Heart left ventricle (tissue), 16 donors: ENCODE measurements at regions of chr16 and their contacts with region 1.

Region 1: GRCh38 chr16:1610276-1611017 is 1.4 kb downstream of the IFT140 start:
- DNase-seq: peak; percentile 85 to 95 (median 90)
- ATAC-seq: peak; percentile 48 to 77 (median 74)
- H3K4me3 ChIP-seq: peak overlapping the region; percentile 25 to 96 (median 72)
- H3K27ac ChIP-seq: peak overlapping the region; percentile 58 to 92 (median 82)
- H3K4me1 ChIP-seq: peaks cover 5 to 46% (median 33%) of the 10 kb centered on the region in 12 donors
- H3K27me3 ChIP-seq: no peaks in the 10 kb centered on the region
- CTCF ChIP-seq: no peak
- POLR2A ChIP-seq: peak in 1 of 2 donors; percentile 27

Region 2: DNA sequence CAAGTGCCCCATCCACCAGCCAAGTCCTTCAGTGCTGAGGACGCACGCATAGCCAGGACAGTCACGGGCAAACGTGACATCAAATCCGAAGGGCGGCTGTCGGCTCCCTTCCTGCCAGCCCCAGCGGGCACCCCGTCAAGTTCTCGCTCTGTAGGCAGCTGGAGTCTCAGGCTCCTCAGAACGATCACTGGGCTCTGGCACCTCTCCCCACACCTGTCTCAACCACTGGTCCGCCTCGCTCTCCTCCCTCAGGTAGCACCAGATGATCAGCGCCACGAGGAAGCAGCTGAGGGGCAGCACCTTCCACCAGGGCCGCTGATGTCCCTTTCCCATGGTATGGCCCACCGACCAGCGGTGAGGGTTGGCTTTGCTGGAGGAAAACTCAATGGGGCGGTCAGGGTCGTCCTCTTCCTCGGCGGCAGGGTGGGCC is 190.3 kb before region 1 on chr16:
- intact Hi-C with region 1: loop called in 1 of 10 experiments (anchors 5 kb)
- DNase-seq: peak in 2 of 5 donors; percentile 39 to 45
- ATAC-seq: peak in 2 of 4 donors; percentile 1 to 2
- H3K4me3 ChIP-seq: peak overlapping the region; percentile 61 to 98 (median 88)
- H3K27ac ChIP-seq: peak overlapping the region in 11 of 12 donors; percentile 61 to 99 (median 98)
- H3K4me1 ChIP-seq: peaks cover 4 to 26% (median 18%) of the 10 kb centered on the region in 12 donors
- H3K27me3 ChIP-seq: no peaks in the 10 kb centered on the region
- CTCF ChIP-seq: no peak
- POLR2A ChIP-seq: no peak

Region 3: GRCh38 chr16:1533443-1533951 is 77.0 kb before region 1 on chr16 and contains the start of gene TMEM204:
- intact Hi-C with region 1: loop called in 3 of 10 experiments (anchors 1 to 5 kb)
- DNase-seq: peak; percentile 87 to 91 (median 90)
- ATAC-seq: peak; percentile 52 to 76 (median 62)
- H3K4me3 ChIP-seq: peak within 1 kb of the TSS; percentile 66 to 93 (median 87)
- H3K27ac ChIP-seq: peak within 1 kb of the TSS; percentile 92 to 99 (median 96)
- H3K4me1 ChIP-seq: peaks cover 8 to 83% (median 66%) of the 10 kb centered on the region in 12 donors
- H3K27me3 ChIP-seq: peaks cover 0 to 17% (median 0%) of the 10 kb centered on the region in 9 donors
- CTCF ChIP-seq: no peak
- POLR2A ChIP-seq: peak in 1 of 2 donors; percentile 93
- total RNA-seq, gene TMEM204: 14.0 to 64.2 (median 19.5) TPM

Region 4: DNA sequence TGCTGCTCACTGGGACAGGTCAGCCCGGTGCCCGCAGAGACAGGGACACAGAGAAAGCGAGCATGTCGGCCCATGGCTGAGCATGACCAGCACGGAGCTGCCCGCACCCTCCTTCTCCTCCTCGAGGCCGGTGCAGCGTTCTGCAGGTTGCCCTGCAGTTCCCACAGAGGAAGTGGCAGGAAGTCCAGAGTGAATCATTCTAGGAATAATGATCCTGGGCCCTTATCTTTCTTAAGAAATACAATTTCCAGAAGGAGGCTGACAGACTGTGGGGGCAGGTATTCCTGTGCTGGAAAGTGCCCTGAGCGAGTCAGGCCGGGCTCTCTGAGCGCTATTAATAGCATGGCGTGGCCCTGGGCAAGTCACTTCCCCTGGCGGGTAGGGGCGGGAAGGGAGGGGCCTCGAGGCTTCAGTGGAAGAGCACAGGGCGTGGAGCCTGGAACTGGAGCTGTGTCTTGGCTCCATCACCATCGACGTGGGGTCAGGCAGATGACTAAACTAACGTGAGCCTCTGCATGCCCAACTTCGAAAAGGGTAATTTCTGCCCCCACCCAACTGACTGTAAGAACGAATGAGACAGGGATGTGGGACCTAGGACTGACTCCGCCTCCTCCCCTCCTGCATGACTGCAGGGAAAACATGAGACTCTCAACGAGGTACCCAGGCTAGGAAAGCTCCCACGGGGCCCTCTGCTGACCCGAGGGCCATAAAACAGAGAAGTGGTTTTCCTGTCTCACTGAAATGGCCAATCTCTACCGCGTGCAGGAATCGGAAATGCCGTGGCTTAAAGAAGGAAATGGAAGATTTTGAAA is 67.2 kb before region 1 on chr16:
- intact Hi-C with region 1: loop called in 2 of 10 experiments (anchors 5 kb)
- DNase-seq: peak; percentile 83 to 91 (median 85)
- ATAC-seq: peak; percentile 26 to 75 (median 70)
- H3K4me3 ChIP-seq: peak overlapping the region in 4 of 12 donors; percentile 1 to 23 (median 12)
- H3K27ac ChIP-seq: peak overlapping the region; percentile 85 to 98 (median 95)
- H3K4me1 ChIP-seq: peaks cover 40 to 100% (median 95%) of the 10 kb centered on the region in 12 donors
- H3K27me3 ChIP-seq: no peaks in the 10 kb centered on the region
- CTCF ChIP-seq: peak in 1 of 12 donors; percentile 18
- POLR2A ChIP-seq: peak in 1 of 2 donors; percentile 28

Region 5: GRCh38 chr16:1556254-1556653 is 54.2 kb before region 1 on chr16:
- intact Hi-C with region 1: loop called in 2 of 10 experiments (anchors 5 kb)
- DNase-seq: no peak
- ATAC-seq: no peak
- H3K4me3 ChIP-seq: no peak overlapping the region
- H3K27ac ChIP-seq: no peak overlapping the region
- H3K4me1 ChIP-seq: peaks cover 0 to 37% (median 19%) of the 10 kb centered on the region in 12 donors
- H3K27me3 ChIP-seq: no peaks in the 10 kb centered on the region
- CTCF ChIP-seq: no peak
- POLR2A ChIP-seq: no peak

Region 6: GRCh38 chr16:1597154-1597553 is 13.3 kb before region 1 on chr16:
- intact Hi-C with region 1: no loop called
- DNase-seq: no peak
- ATAC-seq: no peak
- H3K4me3 ChIP-seq: no peak overlapping the region
- H3K27ac ChIP-seq: no peak overlapping the region
- H3K4me1 ChIP-seq: no peaks in the 10 kb centered on the region
- H3K27me3 ChIP-seq: no peaks in the 10 kb centered on the region
- CTCF ChIP-seq: no peak
- POLR2A ChIP-seq: no peak

Region 7: DNA sequence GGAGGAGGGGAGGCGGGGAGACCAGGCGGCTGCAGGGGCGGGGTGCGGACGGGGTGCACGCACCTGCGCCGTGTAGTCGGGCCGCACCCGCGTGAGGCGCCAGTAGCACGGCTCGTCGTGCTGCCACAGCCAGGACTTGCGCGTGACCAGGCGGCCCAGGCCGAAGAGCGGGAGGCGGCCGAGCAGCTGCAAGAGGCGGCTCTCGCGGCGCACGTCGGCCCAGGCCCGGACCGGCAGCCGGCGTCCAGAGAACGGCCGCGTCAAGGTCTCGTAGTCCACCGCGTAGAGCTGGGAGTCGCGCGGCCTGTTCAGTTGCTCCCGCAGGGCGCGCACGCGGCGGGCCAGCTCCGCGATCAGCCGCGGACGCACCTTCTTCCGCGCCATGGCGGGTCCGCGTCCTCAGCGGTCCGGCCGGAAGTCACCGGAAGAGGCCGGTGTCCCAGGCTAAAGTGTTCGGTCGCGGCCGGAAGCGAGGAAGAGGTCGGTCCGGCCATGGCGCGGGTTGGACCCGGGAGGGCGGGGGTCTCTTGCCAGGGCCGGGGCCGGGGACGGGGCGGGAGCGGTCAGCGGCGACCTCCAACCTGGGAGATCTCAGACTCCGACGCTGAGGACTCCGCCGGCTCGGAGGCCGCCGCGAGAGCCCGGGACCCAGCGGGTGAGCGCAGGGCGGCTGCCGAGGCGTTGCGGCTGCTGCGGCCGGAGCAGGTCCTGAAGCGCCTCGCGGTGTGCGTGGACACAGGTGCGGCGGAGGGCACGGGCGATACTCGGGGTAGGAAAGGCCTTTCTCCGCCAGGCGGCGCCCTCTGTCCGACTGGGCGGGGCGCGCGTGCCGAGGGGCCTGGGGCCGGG is 162.5 kb after region 1 on chr16 and contains the starts of genes EME2 and MRPS34:
- intact Hi-C with region 1: loop called in 1 of 10 experiments (anchors 5 kb)
- DNase-seq: peak; percentile 83 to 93 (median 88)
- ATAC-seq: peak; percentile 18 to 67 (median 64)
- H3K4me3 ChIP-seq: peak within 1 kb of the TSS; percentile 75 to 99 (median 96)
- H3K27ac ChIP-seq: peak within 1 kb of the TSS; percentile 91 to 99 (median 97)
- H3K4me1 ChIP-seq: peaks cover 14 to 44% (median 32%) of the 10 kb centered on the region in 12 donors
- H3K27me3 ChIP-seq: no peaks in the 10 kb centered on the region
- CTCF ChIP-seq: peak; percentile 56 to 86 (median 71)
- POLR2A ChIP-seq: peak in 1 of 2 donors; percentile 69
- total RNA-seq, gene EME2: 3.4 to 12.9 (median 6.0) TPM
- total RNA-seq, gene MRPS34: 58.0 to 123 (median 79.3) TPM